Endothelial cell of umbilical vein (primary cell): ENCODE measurements at regions of chr10 and their contacts with region 1.

Region 1: DNA sequence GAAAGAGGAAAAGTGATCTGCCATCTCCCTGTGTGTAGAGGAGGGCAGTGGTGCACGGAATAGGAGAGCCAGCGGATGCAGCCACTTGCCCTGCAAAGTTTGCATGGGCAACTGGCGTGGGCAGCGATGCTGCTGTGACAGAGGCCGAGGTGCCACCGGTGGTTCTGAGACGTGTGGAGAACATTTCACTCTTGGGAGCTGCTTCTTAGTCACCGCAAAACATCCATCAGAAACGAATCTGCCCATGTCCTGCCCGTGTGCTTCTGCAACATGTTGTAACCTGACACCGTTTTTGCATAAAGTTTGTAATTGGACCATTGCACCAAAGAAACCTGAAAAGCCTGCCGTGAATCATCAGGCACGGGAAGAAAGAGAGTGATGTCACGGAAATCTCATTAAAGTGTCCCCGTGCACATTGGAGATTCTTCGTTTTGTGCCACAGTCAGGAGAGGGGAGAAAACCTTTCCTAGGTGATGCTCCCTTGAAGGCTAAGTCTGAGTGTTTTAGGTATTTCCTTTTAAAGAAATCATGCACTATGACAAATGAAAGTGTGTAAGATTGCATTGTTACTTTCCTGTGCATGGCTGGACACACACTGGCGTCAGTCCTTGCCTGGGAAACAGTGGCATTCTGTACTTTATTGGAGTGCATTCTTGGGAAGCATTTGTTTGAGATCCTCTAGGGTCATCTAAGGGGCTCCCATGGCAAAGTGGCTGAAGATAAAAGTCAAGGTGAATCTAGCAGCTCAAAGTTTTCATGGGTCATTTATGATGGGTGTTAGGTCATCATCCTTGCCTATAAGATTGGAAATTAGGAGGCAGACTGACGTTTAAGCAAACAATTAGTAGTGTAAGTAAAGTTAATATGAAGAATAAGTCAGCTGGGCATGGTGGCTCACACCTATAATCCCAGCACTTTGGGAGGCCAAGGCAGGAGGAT is 302.5 kb downstream of the KLF6 start:
- DNase-seq: peak; percentile 94
- H3K4me3 ChIP-seq: no peak overlapping the region
- H3K27ac ChIP-seq: no peak overlapping the region
- H3K4me1 ChIP-seq: peaks cover 9% of the 10 kb centered on the region
- H3K27me3 ChIP-seq: peaks cover 0 to 2% of the 10 kb centered on the region in 2 experiments
- CTCF ChIP-seq: no peak
- POLR2A ChIP-seq: no peak

Region 2: DNA sequence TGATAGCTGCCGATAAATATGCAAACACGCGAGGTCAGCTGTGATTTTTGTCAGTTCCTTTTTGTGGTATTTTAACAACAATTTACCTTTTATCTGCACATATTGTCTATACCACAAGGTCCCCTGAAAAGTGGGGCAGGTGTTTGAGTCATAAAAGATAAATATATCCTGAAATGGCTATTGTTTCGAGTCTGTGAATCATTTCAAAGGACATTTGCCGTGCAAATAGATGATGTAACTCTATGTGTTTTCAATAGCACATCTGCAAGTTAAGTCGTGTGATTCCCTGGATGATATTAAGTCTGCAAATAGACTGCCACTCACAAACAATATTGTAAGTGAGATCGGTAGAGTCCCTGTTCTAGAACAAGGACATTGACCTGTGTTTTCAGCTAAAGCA is 116.8 kb before region 1 on chr10:
- CTCF ChIA-PET with region 1: no interaction called
- POLR2A ChIA-PET with region 1: no interaction called
- dilution Hi-C with region 1: no loop called
- intact Hi-C with region 1: no loop called
- DNase-seq: peak; percentile 32
- H3K4me3 ChIP-seq: no peak overlapping the region
- H3K27ac ChIP-seq: no peak overlapping the region
- H3K4me1 ChIP-seq: peaks cover 4% of the 10 kb centered on the region
- H3K27me3 ChIP-seq: no peaks in the 10 kb centered on the region
- CTCF ChIP-seq: no peak
- POLR2A ChIP-seq: no peak

Region 3: GRCh38 chr10:3538658-3539531 is 56.4 kb after region 1 on chr10:
- CTCF ChIA-PET with region 1: no interaction called
- POLR2A ChIA-PET with region 1: no interaction called
- dilution Hi-C with region 1: no loop called
- intact Hi-C with region 1: loop called (anchors 1 kb)
- DNase-seq: peak; percentile 97
- H3K4me3 ChIP-seq: no peak overlapping the region
- H3K27ac ChIP-seq: peak overlapping the region; percentile 87
- H3K4me1 ChIP-seq: peaks cover 25% of the 10 kb centered on the region
- H3K27me3 ChIP-seq: no peaks in the 10 kb centered on the region
- CTCF ChIP-seq: no peak
- POLR2A ChIP-seq: no peak